Gastrocnemius medialis (tissue), 4 donors: ENCODE measurements at regions of chr7 and their contacts with region 1.

Region 1: DNA sequence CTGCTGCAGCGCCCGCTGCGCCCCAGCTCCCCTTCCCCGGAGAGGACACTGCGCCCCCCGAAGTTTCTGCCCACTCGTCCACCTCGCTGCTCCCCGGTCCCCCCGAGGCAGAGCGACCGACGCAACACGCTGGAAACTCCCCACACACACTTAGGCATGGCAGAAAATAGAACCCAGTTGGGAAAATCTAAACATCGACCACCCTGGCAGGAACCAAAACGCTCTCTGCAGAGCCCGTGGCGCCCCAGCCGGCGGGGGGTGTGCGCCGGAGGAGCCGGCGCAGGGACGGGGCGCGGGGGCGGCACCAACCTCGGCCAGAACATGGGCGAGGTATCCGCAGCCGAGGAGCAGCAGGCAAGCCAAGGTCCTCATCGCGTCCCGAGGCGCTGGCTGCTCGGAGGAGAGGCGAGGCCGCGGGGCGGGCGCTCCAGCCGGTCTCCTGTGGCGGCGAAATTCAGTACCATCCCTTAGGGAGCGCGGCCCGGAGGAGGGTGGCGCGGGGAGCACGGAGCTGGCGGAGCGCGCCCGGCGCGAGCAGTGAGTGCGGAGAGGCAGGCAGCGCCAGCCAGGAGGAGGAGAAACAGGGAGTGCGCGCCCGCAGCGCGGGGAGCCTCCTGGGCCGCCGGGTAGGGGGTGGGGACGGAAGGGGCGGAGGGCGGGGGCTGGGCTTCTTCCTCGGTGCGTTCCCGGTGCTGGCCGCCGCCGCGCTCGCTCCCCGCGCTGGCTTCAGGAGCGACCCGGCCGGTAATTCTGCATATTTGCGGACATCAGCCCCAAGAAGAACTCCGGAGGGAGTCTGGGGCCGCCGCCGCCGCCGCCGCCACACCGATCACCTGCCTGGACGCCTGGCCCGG is 789 bp downstream of the PDGFA start:
- DNase-seq: peak; percentile 76 to 80
- ATAC-seq: peak; percentile 45 to 49
- H3K4me3 ChIP-seq: peak overlapping the region; percentile 53 to 94 (median 83)
- H3K27ac ChIP-seq: peak overlapping the region; percentile 82 to 99 (median 95)
- H3K4me1 ChIP-seq: peaks cover 25 to 40% of the 10 kb centered on the region in 2 donors
- H3K27me3 ChIP-seq: no peaks in the 10 kb centered on the region
- CTCF ChIP-seq: peak in 2 of 5 experiments; percentile 21 to 22
- POLR2A ChIP-seq: peak; percentile 70 to 76

Region 2: GRCh38 chr7:341841-342638 is 176.8 kb before region 1 on chr7:
- in situ Hi-C with region 1: no loop called
- intact Hi-C with region 1: loop called (anchors 5 kb)
- DNase-seq: peak; percentile 52 to 65
- ATAC-seq: peak; percentile 84 to 90
- H3K4me3 ChIP-seq: no peak overlapping the region
- H3K27ac ChIP-seq: peak overlapping the region in 3 of 4 donors; percentile 61 to 81 (median 65)
- H3K4me1 ChIP-seq: peaks cover 7 to 8% of the 10 kb centered on the region in 2 donors
- H3K27me3 ChIP-seq: no peaks in the 10 kb centered on the region
- CTCF ChIP-seq: no peak
- POLR2A ChIP-seq: no peak

Region 3: DNA sequence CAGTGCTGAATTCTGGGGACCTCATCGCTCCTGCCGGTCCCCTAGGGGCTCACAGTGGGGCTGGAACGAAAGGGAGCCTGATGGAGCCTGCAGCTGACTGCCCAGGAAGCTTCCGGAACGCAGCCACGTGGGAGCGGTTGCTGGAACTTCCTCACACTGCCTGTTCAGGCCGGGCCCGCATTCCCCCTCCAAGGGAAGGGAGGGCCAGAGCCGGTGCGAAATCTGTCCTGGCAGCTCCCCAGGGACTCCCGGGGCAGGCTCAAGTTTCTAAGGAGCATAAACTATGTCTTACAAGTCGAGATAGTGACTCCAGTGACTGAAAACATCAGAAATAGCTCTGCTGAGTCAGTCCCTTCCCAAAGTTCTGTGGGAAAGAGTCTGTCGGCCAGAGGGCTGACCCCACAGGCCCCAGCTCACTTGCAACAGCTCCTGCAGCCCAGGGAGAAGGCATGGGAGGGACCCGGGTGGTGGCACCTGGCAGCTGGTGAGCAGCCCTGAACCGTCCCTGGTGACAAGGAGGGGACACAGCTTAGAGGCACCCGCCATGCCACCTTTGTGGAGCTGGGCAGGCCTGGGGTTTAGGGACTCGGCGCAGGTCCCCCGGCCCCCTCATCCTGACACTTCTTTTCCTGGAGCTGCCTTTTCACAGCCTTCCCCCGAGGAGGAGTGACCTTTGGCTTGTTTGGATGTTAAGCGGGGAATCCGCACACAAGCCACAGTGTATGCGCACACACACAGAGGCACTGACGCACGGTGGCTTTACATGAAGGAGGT is 46.8 kb before region 1 on chr7:
- in situ Hi-C with region 1: no loop called
- intact Hi-C with region 1: loop called (anchors 2 kb)
- DNase-seq: peak; percentile 91 to 96
- ATAC-seq: peak; percentile 97 to 98
- H3K4me3 ChIP-seq: no peak overlapping the region
- H3K27ac ChIP-seq: peak overlapping the region; percentile 77 to 84 (median 80)
- H3K4me1 ChIP-seq: peaks cover 13 to 14% of the 10 kb centered on the region in 2 donors
- H3K27me3 ChIP-seq: no peaks in the 10 kb centered on the region
- CTCF ChIP-seq: no peak
- POLR2A ChIP-seq: no peak

Region 4: DNA sequence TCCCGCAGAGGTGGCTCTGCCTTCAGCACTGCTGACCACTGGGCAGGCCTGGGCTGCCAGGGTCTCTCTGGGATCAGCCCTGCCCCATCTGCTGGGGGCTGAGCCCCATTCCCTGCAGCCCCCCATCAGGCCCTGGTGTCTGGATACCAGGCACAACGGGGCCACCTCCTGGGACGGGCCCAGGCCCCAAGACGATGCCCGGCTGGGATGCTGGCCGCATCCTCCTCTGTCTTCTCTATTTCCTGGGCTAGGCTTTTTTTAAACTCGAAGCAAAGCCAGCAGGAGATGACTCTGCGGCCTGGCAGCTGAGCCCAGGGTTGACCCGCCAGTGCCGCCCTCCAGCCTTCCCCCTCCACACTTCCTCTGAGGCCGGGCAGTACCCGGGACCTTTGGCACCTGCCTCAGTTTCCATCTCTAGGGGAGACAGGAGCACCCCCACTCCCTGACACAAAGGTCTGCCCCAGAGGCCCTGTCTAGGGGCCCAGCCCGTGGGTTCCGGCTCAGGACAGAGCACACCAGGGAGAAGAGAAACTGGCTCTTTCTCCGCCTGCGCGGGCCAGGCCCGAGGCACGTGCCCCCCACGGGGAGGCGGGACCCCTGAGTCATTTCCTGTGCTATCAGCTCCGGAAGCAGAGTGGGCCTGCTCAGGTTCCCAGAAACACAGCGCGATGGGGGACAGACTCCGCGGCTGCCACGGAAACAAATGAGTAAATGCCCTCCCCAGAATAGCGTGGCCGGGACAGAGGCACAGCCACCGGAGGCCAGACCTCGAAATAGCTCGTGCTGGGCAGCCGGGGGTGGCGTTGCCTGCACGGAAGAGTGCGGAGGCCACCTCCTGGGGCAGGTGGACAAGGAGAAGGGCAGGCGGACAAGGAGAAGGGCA is 85.4 kb after region 1 on chr7:
- in situ Hi-C with region 1: no loop called
- intact Hi-C with region 1: loop called (anchors 1 kb)
- DNase-seq: peak; percentile 68 to 83
- ATAC-seq: peak; percentile 88 to 89
- H3K4me3 ChIP-seq: peak overlapping the region; percentile 30 to 49 (median 38)
- H3K27ac ChIP-seq: peak overlapping the region; percentile 89 to 94 (median 90)
- H3K4me1 ChIP-seq: peaks cover 21% of the 10 kb centered on the region in 2 donors
- H3K27me3 ChIP-seq: no peaks in the 10 kb centered on the region
- CTCF ChIP-seq: peak in 1 of 5 experiments; percentile 6
- POLR2A ChIP-seq: peak; percentile 66 to 70

Region 5: DNA sequence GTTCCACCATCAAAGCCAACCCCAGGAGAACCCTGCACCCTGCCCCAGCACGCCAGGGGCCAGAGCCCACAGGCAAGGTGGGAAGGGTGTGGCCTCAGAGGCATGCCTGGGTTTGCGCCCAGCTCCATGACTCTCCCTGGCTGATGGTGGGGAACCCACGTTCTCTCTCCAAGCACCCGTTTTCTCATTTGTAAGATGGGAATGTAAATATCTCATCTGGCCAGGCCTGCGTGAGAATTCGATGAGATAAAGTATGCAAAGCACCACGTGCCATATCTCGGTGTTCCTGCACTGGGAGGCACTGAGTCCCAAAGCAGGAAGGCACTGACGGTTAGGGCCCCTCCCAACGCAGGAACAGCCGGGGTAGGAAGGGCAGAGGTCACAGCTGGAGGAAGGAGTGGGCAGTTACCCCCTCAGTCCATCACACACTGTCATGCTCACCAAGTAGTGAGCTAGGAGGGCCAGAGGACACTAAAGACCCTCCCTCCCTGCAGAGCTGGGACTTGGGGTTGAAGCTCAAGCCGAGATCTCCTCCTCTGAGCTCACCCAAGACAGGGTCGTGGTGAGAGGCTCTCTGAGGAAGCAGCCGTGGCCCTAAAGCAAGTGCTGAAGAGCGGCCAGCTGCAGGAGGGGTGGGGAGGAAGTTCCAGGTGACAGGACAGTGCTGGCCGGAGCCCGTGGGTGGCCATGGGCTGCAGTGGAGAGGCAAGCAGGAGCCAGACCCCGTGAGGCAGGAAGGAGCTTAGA is 180.4 kb after region 1 on chr7:
- in situ Hi-C with region 1: no loop called
- intact Hi-C with region 1: no loop called
- DNase-seq: no peak
- ATAC-seq: peak in 1 of 2 donors; percentile 33
- H3K4me3 ChIP-seq: no peak overlapping the region
- H3K27ac ChIP-seq: peak overlapping the region in 2 of 4 donors; percentile 33 to 38
- H3K4me1 ChIP-seq: no peaks in the 10 kb centered on the region
- H3K27me3 ChIP-seq: no peaks in the 10 kb centered on the region
- CTCF ChIP-seq: no peak
- POLR2A ChIP-seq: no peak

Region 6: GRCh38 chr7:883055-884021 is 364.5 kb after region 1 on chr7:
- in situ Hi-C with region 1: no loop called
- intact Hi-C with region 1: loop called (anchors 5 kb)
- DNase-seq: peak; percentile 49 to 76
- ATAC-seq: peak; percentile 34 to 42
- H3K4me3 ChIP-seq: no peak overlapping the region
- H3K27ac ChIP-seq: peak overlapping the region; percentile 64 to 95 (median 84)
- H3K4me1 ChIP-seq: peaks cover 82 to 83% of the 10 kb centered on the region in 2 donors
- H3K27me3 ChIP-seq: no peaks in the 10 kb centered on the region
- CTCF ChIP-seq: no peak
- POLR2A ChIP-seq: peak in 1 of 2 donors; percentile 64